Activated T-helper 2 cell treated with anti-CD3 and anti-CD28 coated beads, Interferon-gamma antibody, Interleukin-2, Interleukin-4, amounts not matched to agents 10 μg/mL and 5 μg/mL and 100 μg/mL, durations not matched to agents 14 hours and 24 hours and 36 hours (primary cell): ENCODE measurements at regions of chr6 and their contacts with region 1.

Region 1: DNA sequence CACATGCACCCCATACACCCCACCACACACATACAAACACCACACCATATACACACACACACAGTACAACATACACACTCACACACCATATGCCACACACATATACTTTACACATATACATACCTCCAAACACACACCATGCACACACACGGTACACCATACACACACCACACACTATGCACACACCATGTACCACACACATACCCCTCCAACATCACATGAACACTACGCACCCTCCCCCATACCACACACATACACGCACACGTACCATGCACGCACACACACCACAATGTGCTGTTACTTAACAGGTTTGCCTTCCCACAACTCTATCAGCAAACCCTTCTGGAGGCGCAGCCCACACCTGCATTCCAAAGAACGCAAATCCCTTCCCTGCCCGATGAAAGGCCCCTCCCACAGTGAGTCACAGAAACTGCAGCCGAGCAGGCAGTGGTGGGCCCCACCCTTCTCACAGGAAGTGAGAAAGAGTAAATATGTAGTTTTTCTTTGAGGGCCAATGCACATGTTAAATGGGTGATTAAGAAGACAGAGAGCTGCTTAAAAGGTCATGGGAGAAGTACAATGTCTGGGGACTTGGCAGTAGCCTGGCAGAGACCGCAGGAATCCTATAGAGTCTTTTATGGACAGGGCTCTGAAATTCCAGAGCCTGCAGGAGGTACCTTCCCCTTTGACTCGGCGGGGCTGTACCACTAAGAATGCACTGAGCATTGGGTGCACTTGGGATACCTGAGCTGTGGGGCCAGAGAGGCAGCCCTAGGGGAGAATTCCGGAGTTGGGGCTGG is 34.1 kb upstream of the EZR start:
- DNase-seq: peak; percentile 86
- H3K4me3 Mint-ChIP-seq: no peak overlapping the region
- H3K27ac Mint-ChIP-seq: no peak overlapping the region
- H3K4me1 Mint-ChIP-seq: peaks cover 29% of the 10 kb centered on the region
- H3K27me3 Mint-ChIP-seq: no peaks in the 10 kb centered on the region

Region 2: GRCh38 chr6:158270389-158271127 is 582.7 kb before region 1 on chr6:
- intact Hi-C with region 1: loop called (anchors 5 kb)
- DNase-seq: no peak
- H3K4me3 Mint-ChIP-seq: no peak overlapping the region
- H3K27ac Mint-ChIP-seq: peak overlapping the region; percentile 49
- H3K4me1 Mint-ChIP-seq: peaks cover 25% of the 10 kb centered on the region
- H3K27me3 Mint-ChIP-seq: no peaks in the 10 kb centered on the region

Region 3: DNA sequence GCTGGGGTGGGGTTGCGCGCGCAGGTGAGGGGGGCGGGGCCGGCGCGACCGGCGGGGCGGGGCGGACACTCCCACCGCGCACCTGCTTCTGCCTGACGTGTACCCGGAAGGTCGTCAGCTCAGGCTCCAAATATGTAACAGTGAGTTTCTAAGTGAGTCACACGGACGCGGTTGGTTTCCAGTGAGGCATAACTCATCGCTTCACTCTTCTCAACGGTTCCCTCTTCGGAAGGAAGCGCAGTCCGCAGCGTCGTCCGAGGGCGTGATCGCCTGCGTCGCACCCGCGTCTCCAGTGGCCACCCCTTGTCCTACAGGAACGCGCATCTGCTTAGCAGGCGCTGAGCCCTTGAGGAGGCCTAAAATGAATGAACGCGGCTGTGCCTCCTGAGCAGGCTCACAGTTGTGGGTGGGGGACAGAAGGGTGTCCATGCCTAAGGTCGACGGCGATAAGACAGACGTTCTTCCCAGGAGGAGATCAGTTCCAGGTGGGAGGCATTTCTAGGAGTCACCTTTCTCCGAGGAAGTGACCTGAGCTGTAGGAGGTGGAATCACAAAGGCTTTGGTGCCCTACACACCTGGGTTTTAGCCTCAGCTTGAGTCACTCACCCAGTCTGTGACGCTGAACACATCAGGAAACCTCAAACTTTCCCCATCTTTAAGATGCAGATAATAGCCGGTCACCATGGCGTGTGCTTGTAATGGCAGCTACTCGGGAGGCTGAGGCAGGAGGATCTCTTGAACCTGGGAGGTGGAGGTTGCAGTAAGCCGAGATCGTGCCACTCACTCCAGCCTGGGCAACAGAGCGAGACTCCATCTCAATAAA is 16.8 kb after region 1 on chr6:
- intact Hi-C with region 1: loop called (anchors 1 kb)
- DNase-seq: peak; percentile 94
- H3K4me3 Mint-ChIP-seq: peak overlapping the region; percentile 83
- H3K27ac Mint-ChIP-seq: peak overlapping the region; percentile 98
- H3K4me1 Mint-ChIP-seq: peaks cover 32% of the 10 kb centered on the region
- H3K27me3 Mint-ChIP-seq: peaks cover 4% of the 10 kb centered on the region

Region 4: GRCh38 chr6:158879180-158879579 is 25.9 kb after region 1 on chr6:
- intact Hi-C with region 1: loop called (anchors 1 kb)
- DNase-seq: peak; percentile 26
- H3K4me3 Mint-ChIP-seq: no peak overlapping the region
- H3K27ac Mint-ChIP-seq: no peak overlapping the region
- H3K4me1 Mint-ChIP-seq: peaks cover 8% of the 10 kb centered on the region
- H3K27me3 Mint-ChIP-seq: peaks cover 5% of the 10 kb centered on the region

Region 5: GRCh38 chr6:159017757-159018559 is 164.7 kb after region 1 on chr6:
- intact Hi-C with region 1: loop called (anchors 1 kb)
- DNase-seq: no peak
- H3K4me3 Mint-ChIP-seq: peak overlapping the region; percentile 1
- H3K27ac Mint-ChIP-seq: peak overlapping the region; percentile 84
- H3K4me1 Mint-ChIP-seq: peaks cover 45% of the 10 kb centered on the region
- H3K27me3 Mint-ChIP-seq: no peaks in the 10 kb centered on the region

Region 6: GRCh38 chr6:159104163-159104925 is 251.1 kb after region 1 on chr6:
- intact Hi-C with region 1: loop called (anchors 5 kb)
- DNase-seq: peak; percentile 69
- H3K4me3 Mint-ChIP-seq: peak overlapping the region; percentile 11
- H3K27ac Mint-ChIP-seq: peak overlapping the region; percentile 79
- H3K4me1 Mint-ChIP-seq: peaks cover 75% of the 10 kb centered on the region
- H3K27me3 Mint-ChIP-seq: no peaks in the 10 kb centered on the region